ENCODE measurements at regions of chr2 and their contacts with region 1.

Region 1: GRCh38 chr2:230824406-230824978 is 40.2 kb upstream of the ITM2C start:
- DNase-seq: peak; percentile 72 to 77
- H3K4me3 ChIP-seq: no peak overlapping the region
- H3K4me3 Mint-ChIP-seq: no peak overlapping the region
- H3K27ac Mint-ChIP-seq: no peak overlapping the region
- H3K4me1 ChIP-seq: no peaks in the 10 kb centered on the region
- H3K4me1 Mint-ChIP-seq: no peaks in the 10 kb centered on the region
- H3K27me3 ChIP-seq: no peaks in the 10 kb centered on the region
- H3K27me3 Mint-ChIP-seq: no peaks in the 10 kb centered on the region
- CTCF ChIP-seq: peak; percentile 51 to 60

Region 2: DNA sequence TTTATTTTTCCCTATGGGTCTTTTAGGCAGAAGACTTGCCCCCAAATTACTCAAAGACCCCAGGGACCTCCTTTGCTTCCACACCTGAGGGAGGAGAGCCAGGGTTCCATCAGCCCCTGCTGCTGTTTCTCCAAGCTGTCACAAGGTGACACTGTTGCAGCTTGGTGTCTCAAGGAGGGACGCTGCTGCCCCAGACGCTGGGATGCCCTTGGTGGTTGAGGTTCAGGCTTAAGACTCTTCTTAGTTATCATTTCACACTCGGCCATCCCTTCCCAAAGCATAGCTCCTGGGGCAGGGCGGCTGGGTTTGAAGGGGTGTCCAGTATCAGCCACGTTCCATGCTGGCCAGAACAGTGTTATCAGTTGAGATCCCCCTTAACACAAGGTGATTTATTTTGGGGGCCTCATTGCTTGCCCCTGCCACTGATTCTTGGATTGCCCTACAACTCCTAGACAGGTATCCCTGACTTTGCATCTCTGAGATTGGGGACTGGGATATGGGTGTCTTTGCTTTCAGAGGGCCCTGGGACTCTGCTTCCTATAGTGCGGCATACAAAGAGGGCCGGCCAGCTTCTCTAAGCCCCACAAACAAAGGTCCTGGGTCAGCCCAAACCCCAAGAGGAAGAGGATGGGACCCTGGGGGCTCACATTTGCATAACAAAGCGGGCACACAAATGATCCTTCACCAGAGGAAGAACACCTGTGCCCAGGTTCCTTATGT is 77.8 kb after region 1 on chr2:
- CTCF ChIA-PET with region 1: interaction called, 7 read pairs
- POLR2A ChIA-PET with region 1: no interaction called
- intact Hi-C with region 1: loop called (anchors 2 kb)
- DNase-seq: peak; percentile 61 to 62
- H3K4me3 ChIP-seq: no peak overlapping the region
- H3K4me3 Mint-ChIP-seq: no peak overlapping the region
- H3K27ac Mint-ChIP-seq: no peak overlapping the region
- H3K4me1 ChIP-seq: no peaks in the 10 kb centered on the region
- H3K4me1 Mint-ChIP-seq: peaks cover 8% of the 10 kb centered on the region
- H3K27me3 ChIP-seq: no peaks in the 10 kb centered on the region
- H3K27me3 Mint-ChIP-seq: no peaks in the 10 kb centered on the region
- CTCF ChIP-seq: peak; percentile 73 to 86

Region 3: GRCh38 chr2:230913406-230914143 is 89.1 kb after region 1 on chr2:
- CTCF ChIA-PET with region 1: no interaction called
- POLR2A ChIA-PET with region 1: no interaction called
- intact Hi-C with region 1: loop called (anchors 1 kb)
- DNase-seq: peak in 1 of 2 experiments; percentile 9
- H3K4me3 ChIP-seq: no peak overlapping the region
- H3K4me3 Mint-ChIP-seq: no peak overlapping the region
- H3K27ac Mint-ChIP-seq: no peak overlapping the region
- H3K4me1 ChIP-seq: no peaks in the 10 kb centered on the region
- H3K4me1 Mint-ChIP-seq: peaks cover 5% of the 10 kb centered on the region
- H3K27me3 ChIP-seq: no peaks in the 10 kb centered on the region
- H3K27me3 Mint-ChIP-seq: peaks cover 3% of the 10 kb centered on the region
- CTCF ChIP-seq: peak; percentile 14 to 42

Region 4: DNA sequence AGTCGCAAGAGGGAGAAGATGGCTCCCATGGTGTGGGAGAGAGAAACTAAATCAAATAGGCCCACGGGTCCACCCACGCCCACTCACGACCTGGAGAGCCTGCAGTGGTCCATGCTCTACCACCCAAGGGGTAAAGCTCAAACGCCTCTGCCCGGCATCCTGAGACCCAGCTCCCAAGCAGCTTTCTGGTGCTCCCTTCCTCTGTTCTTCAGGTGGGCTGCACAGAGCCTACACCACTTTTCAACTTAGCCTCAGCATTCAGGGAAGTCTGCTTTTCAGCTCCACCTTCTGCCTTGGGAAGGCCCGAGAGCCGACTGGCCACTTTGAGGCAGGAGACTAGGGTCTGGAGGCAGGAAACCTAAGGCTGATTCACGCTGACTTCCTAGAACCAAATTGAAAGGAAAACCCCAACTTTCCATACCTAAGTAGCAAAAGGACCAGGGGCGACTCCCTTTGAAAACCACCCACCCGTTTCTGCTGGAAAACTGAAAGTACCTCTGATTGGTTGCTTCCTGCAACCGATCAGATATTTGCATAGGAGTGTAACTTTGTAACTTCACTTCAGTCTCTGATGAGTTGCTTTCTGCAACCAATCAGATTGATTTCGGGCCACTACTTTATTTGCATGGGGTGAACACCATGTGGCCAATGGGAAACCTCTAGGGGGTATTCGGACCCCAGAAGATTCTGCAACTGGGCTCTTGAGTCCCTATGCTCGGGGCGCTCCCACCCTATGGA is 144.6 kb after region 1 on chr2:
- CTCF ChIA-PET with region 1: no interaction called
- POLR2A ChIA-PET with region 1: no interaction called
- intact Hi-C with region 1: no loop called
- DNase-seq: no peak
- H3K4me3 ChIP-seq: no peak overlapping the region
- H3K4me3 Mint-ChIP-seq: no peak overlapping the region
- H3K27ac Mint-ChIP-seq: no peak overlapping the region
- H3K4me1 ChIP-seq: no peaks in the 10 kb centered on the region
- H3K4me1 Mint-ChIP-seq: no peaks in the 10 kb centered on the region
- H3K27me3 ChIP-seq: no peaks in the 10 kb centered on the region
- H3K27me3 Mint-ChIP-seq: no peaks in the 10 kb centered on the region
- CTCF ChIP-seq: no peak

Region 5: GRCh38 chr2:231000211-231000904 is 175.9 kb after region 1 on chr2:
- CTCF ChIA-PET with region 1: no interaction called
- POLR2A ChIA-PET with region 1: no interaction called
- intact Hi-C with region 1: no loop called
- DNase-seq: no peak
- H3K4me3 ChIP-seq: no peak overlapping the region
- H3K4me3 Mint-ChIP-seq: no peak overlapping the region
- H3K27ac Mint-ChIP-seq: no peak overlapping the region
- H3K4me1 ChIP-seq: no peaks in the 10 kb centered on the region
- H3K4me1 Mint-ChIP-seq: peaks cover 17% of the 10 kb centered on the region
- H3K27me3 ChIP-seq: no peaks in the 10 kb centered on the region
- H3K27me3 Mint-ChIP-seq: no peaks in the 10 kb centered on the region
- CTCF ChIP-seq: no peak